IMR-90 (cell line): ENCODE measurements at regions of chr9 and their contacts with region 1.

Region 1: DNA sequence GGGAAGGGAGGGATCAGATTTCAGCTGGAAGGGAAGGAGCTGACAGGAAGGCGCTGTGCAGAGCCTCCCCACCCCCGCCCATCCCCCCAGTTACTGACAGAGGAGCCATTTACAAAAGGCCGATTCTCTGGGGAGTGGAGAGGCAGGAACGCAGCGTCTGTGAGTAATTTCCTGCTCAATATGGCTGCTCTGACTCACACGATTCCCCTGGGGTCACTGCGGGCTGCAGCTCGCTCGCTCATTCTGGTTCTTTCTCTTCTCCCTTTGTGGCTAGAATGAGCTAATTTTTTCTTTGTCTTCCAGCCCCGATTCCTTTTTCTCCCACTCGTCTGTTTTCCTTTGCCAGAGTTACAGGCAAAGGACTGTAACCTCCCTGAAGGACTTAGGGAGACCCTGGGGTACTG is 28.8 kb downstream of the PTPA start:
- DNase-seq: peak; percentile 100
- ATAC-seq: peak; percentile 64
- H3K4me3 ChIP-seq: peak overlapping the region; percentile 28
- H3K27ac ChIP-seq: peak overlapping the region; percentile 98
- H3K4me1 ChIP-seq: peaks cover 49% of the 10 kb centered on the region
- H3K27me3 ChIP-seq: no peaks in the 10 kb centered on the region
- CTCF ChIP-seq: no peak
- POLR2A ChIP-seq: peak; percentile 86
- RAD21 ChIP-seq: peak; percentile 32

Region 2: DNA sequence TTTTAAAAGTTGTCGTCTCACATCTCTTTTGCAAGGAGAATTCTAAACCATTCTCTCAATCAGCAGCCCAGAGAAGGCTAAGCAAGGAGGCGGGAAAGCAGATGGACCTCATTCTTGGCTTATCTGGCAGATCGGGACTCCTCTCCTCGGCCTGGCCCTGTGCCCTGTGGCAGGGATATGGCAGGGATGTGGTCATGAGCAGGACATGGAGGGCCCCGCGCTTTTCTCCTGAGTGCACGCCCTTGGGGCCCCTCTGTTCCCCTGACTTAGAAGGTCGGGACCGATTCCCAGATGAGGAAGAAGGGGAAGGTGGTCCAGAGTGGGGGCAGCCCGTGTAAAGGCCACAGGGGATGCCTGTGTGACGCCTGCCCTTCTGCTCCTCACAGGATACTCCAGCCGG is 92.0 kb before region 1 on chr9:
- CTCF ChIA-PET with region 1: no interaction called
- POLR2A ChIA-PET with region 1: no interaction called
- dilution Hi-C with region 1: no loop called
- in situ Hi-C with region 1: no loop called
- intact Hi-C with region 1: no loop called
- DNase-seq: no peak
- ATAC-seq: no peak
- H3K4me3 ChIP-seq: no peak overlapping the region
- H3K27ac ChIP-seq: no peak overlapping the region
- H3K4me1 ChIP-seq: no peaks in the 10 kb centered on the region
- H3K27me3 ChIP-seq: no peaks in the 10 kb centered on the region
- CTCF ChIP-seq: no peak
- POLR2A ChIP-seq: no peak
- RAD21 ChIP-seq: no peak

Region 3: GRCh38 chr9:129172802-129173201 is 32.8 kb after region 1 on chr9:
- CTCF ChIA-PET with region 1: interaction called, 21 read pairs
- POLR2A ChIA-PET with region 1: interaction called, 17 read pairs
- dilution Hi-C with region 1: no loop called
- in situ Hi-C with region 1: no loop called
- intact Hi-C with region 1: loop called (anchors 1 kb)
- DNase-seq: no peak
- ATAC-seq: no peak
- H3K4me3 ChIP-seq: no peak overlapping the region
- H3K27ac ChIP-seq: no peak overlapping the region; the same call in 1 of the 2 replicates
- H3K4me1 ChIP-seq: peaks cover 24% of the 10 kb centered on the region
- H3K27me3 ChIP-seq: no peaks in the 10 kb centered on the region
- CTCF ChIP-seq: no peak
- POLR2A ChIP-seq: no peak
- RAD21 ChIP-seq: no peak

Region 4: GRCh38 chr9:129460323-129461261 is 320.6 kb after region 1 on chr9:
- CTCF ChIA-PET with region 1: no interaction called
- POLR2A ChIA-PET with region 1: no interaction called
- dilution Hi-C with region 1: no loop called
- in situ Hi-C with region 1: no loop called
- intact Hi-C with region 1: no loop called
- DNase-seq: peak; percentile 98
- ATAC-seq: peak; percentile 90
- H3K4me3 ChIP-seq: peak overlapping the region; percentile 25
- H3K27ac ChIP-seq: peak overlapping the region; percentile 99
- H3K4me1 ChIP-seq: peaks cover 36% of the 10 kb centered on the region
- H3K27me3 ChIP-seq: no peaks in the 10 kb centered on the region
- CTCF ChIP-seq: peak; percentile 39
- POLR2A ChIP-seq: peak; percentile 90
- RAD21 ChIP-seq: peak; percentile 47

Region 5: GRCh38 chr9:129495534-129496325 is 355.7 kb after region 1 on chr9:
- CTCF ChIA-PET with region 1: interaction called, 4 read pairs
- POLR2A ChIA-PET with region 1: interaction called, 4 read pairs
- dilution Hi-C with region 1: no loop called
- in situ Hi-C with region 1: no loop called
- intact Hi-C with region 1: loop called (anchors 2 kb)
- DNase-seq: peak; percentile 84
- ATAC-seq: peak; percentile 75
- H3K4me3 ChIP-seq: peak overlapping the region; percentile 22
- H3K27ac ChIP-seq: peak overlapping the region; percentile 99
- H3K4me1 ChIP-seq: peaks cover 49% of the 10 kb centered on the region
- H3K27me3 ChIP-seq: no peaks in the 10 kb centered on the region
- CTCF ChIP-seq: no peak
- POLR2A ChIP-seq: no peak
- RAD21 ChIP-seq: no peak; the same call in 1 of the 2 replicates

Region 6: DNA sequence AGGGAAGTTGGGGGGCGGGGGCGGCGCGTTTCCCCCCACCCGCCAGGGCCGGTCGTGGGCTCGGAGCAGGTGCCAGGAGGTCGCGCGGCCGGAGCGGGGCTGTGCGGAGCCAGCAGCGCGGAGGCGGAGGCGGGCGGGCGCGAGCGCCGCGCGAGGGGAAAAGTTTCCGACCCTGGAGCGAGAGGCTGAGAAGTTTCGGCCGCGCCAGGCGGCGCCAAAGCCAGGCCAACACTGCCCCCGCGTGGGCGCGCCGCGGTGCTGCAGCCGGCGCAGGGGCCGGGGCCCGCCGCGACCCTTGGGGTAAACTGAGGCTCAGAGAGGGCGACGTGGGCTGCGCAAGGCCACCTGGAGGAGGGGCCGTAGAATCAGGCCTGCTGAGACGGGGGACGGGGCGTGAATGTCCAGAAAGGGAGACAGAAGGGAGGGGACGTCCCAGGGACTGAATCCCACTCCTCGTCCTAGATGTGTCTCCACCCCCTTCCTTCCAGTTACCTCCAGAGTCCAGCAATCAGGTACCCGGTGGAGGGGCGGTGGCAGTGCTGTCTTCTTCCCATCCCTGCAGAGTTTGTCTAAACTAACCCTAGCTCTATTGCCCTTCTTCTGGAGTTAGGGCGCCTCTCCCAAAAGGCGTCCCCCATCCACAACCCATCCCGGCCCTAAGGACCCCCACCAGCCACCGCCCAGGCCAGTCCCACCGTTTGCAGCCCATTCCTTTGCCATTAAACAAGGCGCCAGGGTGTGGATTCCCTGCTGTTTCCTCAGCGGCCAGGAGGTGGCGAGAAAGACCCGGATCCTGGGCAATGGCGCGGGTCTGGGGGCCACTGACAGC is 470.7 kb after region 1 on chr9:
- CTCF ChIA-PET with region 1: interaction called, 7 read pairs
- POLR2A ChIA-PET with region 1: interaction called, 3 read pairs
- dilution Hi-C with region 1: no loop called
- in situ Hi-C with region 1: no loop called
- intact Hi-C with region 1: loop called (anchors 1 kb)
- DNase-seq: peak; percentile 58
- ATAC-seq: peak; percentile 84
- H3K4me3 ChIP-seq: peak overlapping the region; percentile 70
- H3K27ac ChIP-seq: peak overlapping the region; percentile 98
- H3K4me1 ChIP-seq: peaks cover 16% of the 10 kb centered on the region
- H3K27me3 ChIP-seq: no peaks in the 10 kb centered on the region
- CTCF ChIP-seq: peak; percentile 94
- POLR2A ChIP-seq: peak; percentile 40; the same call in 1 of the 2 replicates
- RAD21 ChIP-seq: peak; percentile 99

Region 7: GRCh38 chr9:129783516-129784361 is 643.7 kb after region 1 on chr9:
- CTCF ChIA-PET with region 1: no interaction called
- POLR2A ChIA-PET with region 1: no interaction called
- dilution Hi-C with region 1: no loop called
- in situ Hi-C with region 1: no loop called
- intact Hi-C with region 1: loop called (anchors 5 kb)
- DNase-seq: peak; percentile 75
- ATAC-seq: peak; percentile 96
- H3K4me3 ChIP-seq: no peak overlapping the region
- H3K27ac ChIP-seq: no peak overlapping the region
- H3K4me1 ChIP-seq: peaks cover 3% of the 10 kb centered on the region; the same call in 1 of the 2 replicates
- H3K27me3 ChIP-seq: peaks cover 10% of the 10 kb centered on the region
- CTCF ChIP-seq: peak; percentile 96
- POLR2A ChIP-seq: peak; percentile 66
- RAD21 ChIP-seq: peak; percentile 100